Calu3 (cell line): ENCODE measurements at regions of chr12 and their contacts with region 1.

Region 1: GRCh38 chr12:56189176-56189917 is at the start of gene SMARCC2:
- DNase-seq: peak; percentile 96
- H3K4me3 Mint-ChIP-seq: peak within 1 kb of the TSS; percentile 89
- H3K27ac Mint-ChIP-seq: peak within 1 kb of the TSS; percentile 98
- H3K4me1 Mint-ChIP-seq: peaks cover 41% of the 10 kb centered on the region
- H3K27me3 Mint-ChIP-seq: no peaks in the 10 kb centered on the region
- CTCF ChIP-seq: peak; percentile 94
- total RNA-seq, gene SMARCC2: 143 and 150 TPM in 2 replicates

Region 2: GRCh38 chr12:56117778-56118687 is 71.3 kb before region 1 on chr12 and contains the start of gene ZC3H10:
- CTCF ChIA-PET with region 1: interaction called, 53 read pairs
- intact Hi-C with region 1: loop called (anchors 2 kb)
- DNase-seq: peak; percentile 99
- H3K4me3 Mint-ChIP-seq: peak within 1 kb of the TSS; percentile 97
- H3K27ac Mint-ChIP-seq: peak within 1 kb of the TSS; percentile 100
- H3K4me1 Mint-ChIP-seq: peaks cover 17% of the 10 kb centered on the region
- H3K27me3 Mint-ChIP-seq: no peaks in the 10 kb centered on the region
- CTCF ChIP-seq: peak; percentile 21
- total RNA-seq, gene ZC3H10: 6.6 and 8.2 TPM in 2 replicates

Region 3: GRCh38 chr12:56152318-56153033 is 36.9 kb before region 1 on chr12 and contains the start of gene MYL6B:
- CTCF ChIA-PET with region 1: interaction called, 11 read pairs
- intact Hi-C with region 1: no loop called
- DNase-seq: peak; percentile 95
- H3K4me3 Mint-ChIP-seq: peak within 1 kb of the TSS; percentile 73
- H3K27ac Mint-ChIP-seq: peak within 1 kb of the TSS; percentile 78
- H3K4me1 Mint-ChIP-seq: peaks cover 14% of the 10 kb centered on the region
- H3K27me3 Mint-ChIP-seq: no peaks in the 10 kb centered on the region
- CTCF ChIP-seq: no peak
- total RNA-seq, gene MYL6B: 52.4 and 53.7 TPM in 2 replicates

Region 4: GRCh38 chr12:56178347-56178746 is 11.0 kb before region 1 on chr12:
- CTCF ChIA-PET with region 1: interaction called, 11 read pairs
- intact Hi-C with region 1: no loop called
- DNase-seq: no peak
- H3K4me3 Mint-ChIP-seq: no peak overlapping the region
- H3K27ac Mint-ChIP-seq: no peak overlapping the region
- H3K4me1 Mint-ChIP-seq: no peaks in the 10 kb centered on the region
- H3K27me3 Mint-ChIP-seq: no peaks in the 10 kb centered on the region
- CTCF ChIP-seq: no peak

Region 5: DNA sequence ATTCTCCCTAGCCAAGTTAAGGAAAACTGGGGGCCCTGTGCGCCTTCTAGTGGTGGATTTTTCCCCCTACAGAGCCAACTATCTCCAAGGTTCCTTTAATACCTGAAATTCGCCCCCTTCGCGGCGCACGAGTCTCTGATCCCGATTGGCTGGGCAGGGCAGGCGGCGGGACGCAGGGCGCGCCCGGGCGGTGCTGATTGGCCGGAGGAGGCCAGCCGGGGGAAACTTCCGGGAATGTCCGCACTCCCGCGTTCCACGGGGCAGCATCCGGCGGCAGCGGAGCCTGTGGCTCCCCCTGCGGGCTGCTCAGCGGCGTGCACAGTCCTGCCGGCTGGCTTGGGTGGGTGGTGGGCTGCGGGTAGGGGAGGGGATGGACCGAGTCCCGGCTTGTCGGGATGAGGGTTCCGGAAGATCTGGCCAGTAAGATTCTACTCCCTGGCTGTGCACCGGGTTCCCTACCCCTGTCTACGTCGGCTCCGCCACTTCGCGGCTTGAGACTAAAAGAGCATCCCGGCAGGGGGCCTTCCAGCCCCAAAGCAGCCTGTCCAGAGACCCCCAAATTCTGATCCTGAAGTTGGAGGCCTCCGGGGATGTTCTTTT is 34.9 kb after region 1 on chr12 and contains the start of gene NABP2:
- CTCF ChIA-PET with region 1: interaction called, 24 read pairs
- intact Hi-C with region 1: loop called (anchors 1 kb)
- DNase-seq: peak; percentile 99
- H3K4me3 Mint-ChIP-seq: peak within 1 kb of the TSS; percentile 78
- H3K27ac Mint-ChIP-seq: peak within 1 kb of the TSS; percentile 73
- H3K4me1 Mint-ChIP-seq: peaks cover 17% of the 10 kb centered on the region
- H3K27me3 Mint-ChIP-seq: no peaks in the 10 kb centered on the region
- CTCF ChIP-seq: peak; percentile 95
- total RNA-seq, gene NABP2: 55.5 and 63.3 TPM in 2 replicates